PC-9 (cell line): ENCODE measurements at regions of chr6 and their contacts with region 1.

Region 1: DNA sequence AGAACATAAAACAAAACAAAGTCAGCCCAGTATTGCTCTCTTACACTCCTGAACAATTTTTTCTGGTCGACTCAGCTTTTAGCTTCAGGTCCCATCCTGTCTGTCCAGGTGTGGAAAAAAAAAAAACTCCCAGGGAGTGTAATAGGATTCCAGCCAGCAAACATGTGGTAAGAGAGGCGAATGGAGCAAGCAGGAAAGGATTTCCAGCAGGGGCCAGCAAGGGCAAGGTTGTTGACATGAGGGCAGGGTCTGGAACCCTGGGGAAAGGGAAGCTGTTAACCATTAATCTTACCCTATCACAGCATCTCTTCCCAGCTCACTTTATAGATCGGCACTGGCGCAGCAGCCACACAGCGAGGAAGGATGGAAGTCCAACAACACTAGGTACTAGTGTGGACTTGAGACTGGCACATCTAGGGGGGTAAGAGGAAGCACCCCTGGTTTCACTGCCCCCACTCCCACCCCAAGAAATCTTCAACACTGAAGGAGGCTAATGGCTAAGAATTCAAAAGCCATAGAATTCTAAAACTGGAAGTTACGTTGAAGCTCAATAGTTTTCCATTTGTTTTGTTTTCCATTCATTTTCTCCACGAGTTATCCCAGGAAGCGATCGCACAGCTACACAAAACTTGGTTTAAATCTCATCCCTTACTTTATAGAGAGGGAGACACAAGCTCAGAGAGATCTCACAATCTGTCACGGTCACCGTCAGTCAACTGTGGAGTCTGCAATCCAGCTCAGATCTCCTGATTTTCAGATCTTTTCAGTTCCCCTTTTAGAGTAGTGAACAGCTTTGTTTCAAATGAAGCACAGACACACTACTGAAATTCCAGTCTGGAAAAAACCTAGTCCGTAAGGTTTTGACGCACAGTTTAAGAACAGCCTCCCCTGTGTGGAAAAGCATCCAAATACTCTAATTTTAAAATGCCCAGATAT is 53.3 kb downstream of the SLC22A23 start:
- DNase-seq: peak; percentile 34 to 50
- H3K4me3 ChIP-seq: no peak overlapping the region
- H3K27ac ChIP-seq: no peak overlapping the region
- H3K4me1 ChIP-seq: peaks cover 42% of the 10 kb centered on the region
- H3K27me3 ChIP-seq: no peaks in the 10 kb centered on the region
- CTCF ChIP-seq: no peak

Region 2: GRCh38 chr6:3442431-3443220 is 39.1 kb after region 1 on chr6:
- CTCF ChIA-PET with region 1: interaction called, 11 read pairs
- POLR2A ChIA-PET with region 1: no interaction called
- intact Hi-C with region 1: no loop called
- DNase-seq: peak; percentile 24 to 84
- H3K4me3 ChIP-seq: no peak overlapping the region
- H3K27ac ChIP-seq: no peak overlapping the region
- H3K4me1 ChIP-seq: peaks cover 22% of the 10 kb centered on the region
- H3K27me3 ChIP-seq: no peaks in the 10 kb centered on the region
- CTCF ChIP-seq: no peak